ENCODE measurements at regions of chr1 and their contacts with region 1.

Region 1: DNA sequence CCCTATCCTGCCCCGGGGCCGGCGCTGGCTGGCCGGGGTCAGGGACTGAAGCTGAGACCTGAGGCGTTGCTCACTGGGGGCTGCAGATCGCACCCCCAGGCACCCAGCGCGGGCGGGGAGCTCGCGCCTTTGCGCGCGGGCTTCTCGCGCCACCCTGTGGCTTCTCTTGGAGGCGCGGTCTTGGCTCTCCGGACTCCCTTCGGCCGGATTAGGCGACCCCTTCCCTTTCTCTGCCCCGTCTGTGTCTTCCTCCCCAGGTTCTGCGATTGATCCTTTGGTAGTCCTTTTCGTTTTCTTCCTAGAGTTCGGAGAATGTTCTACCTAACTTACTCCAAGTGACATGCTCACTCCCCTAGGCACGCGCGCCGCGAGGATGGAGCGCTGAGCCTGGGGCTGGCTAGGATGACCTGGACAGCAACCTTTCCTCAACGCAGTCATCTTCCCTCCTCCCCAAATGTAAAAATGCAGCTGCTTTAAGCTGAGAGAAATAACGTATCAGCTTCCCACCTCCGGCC is 495 bp upstream of the NTRK1 start:
- DNase-seq: peak in 1 of 2 experiments; percentile 85
- H3K4me3 ChIP-seq: peak overlapping the region; percentile 31 to 62 (median 58)
- H3K27ac ChIP-seq: no peak overlapping the region
- H3K4me1 ChIP-seq: peaks cover 0 to 15% (median 9%) of the 10 kb centered on the region in 4 experiments; a peak in 6 of 7 replicates
- H3K27me3 ChIP-seq: peaks cover 55 to 87% (median 82%) of the 10 kb centered on the region in 4 experiments
- CTCF ChIP-seq: peak; percentile 67 to 80 (median 74)
- EP300 ChIP-seq: no peak
- POLR2A ChIP-seq: no peak
- RAD21 ChIP-seq: peak; percentile 76 to 83

Region 2: GRCh38 chr1:156677616-156678596 is 182.3 kb before region 1 on chr1:
- CTCF ChIA-PET with region 1: interaction called, 15 read pairs
- POLR2A ChIA-PET with region 1: no interaction called
- DNase-seq: peak in 1 of 2 experiments; percentile 74
- H3K4me3 ChIP-seq: peak overlapping the region; percentile 64 to 84 (median 74); a peak in 5 of 8 replicates
- H3K27ac ChIP-seq: no peak overlapping the region
- H3K4me1 ChIP-seq: peaks cover 7 to 37% (median 30%) of the 10 kb centered on the region in 4 experiments
- H3K27me3 ChIP-seq: no peaks in the 10 kb centered on the region; a peak in 2 of 7 replicates
- CTCF ChIP-seq: peak in 2 of 3 experiments; percentile 92 to 97; a peak in 3 of 4 replicates
- EP300 ChIP-seq: no peak
- POLR2A ChIP-seq: no peak
- RAD21 ChIP-seq: peak; percentile 89 to 95

Region 3: GRCh38 chr1:156797212-156797871 is 62.8 kb before region 1 on chr1:
- CTCF ChIA-PET with region 1: interaction called, 139 read pairs
- POLR2A ChIA-PET with region 1: interaction called, 3 read pairs
- DNase-seq: no peak
- H3K4me3 ChIP-seq: no peak overlapping the region
- H3K27ac ChIP-seq: no peak overlapping the region
- H3K4me1 ChIP-seq: no peaks in the 10 kb centered on the region
- H3K27me3 ChIP-seq: no peaks in the 10 kb centered on the region
- CTCF ChIP-seq: peak in 2 of 3 experiments; percentile 84 to 85; a peak in 3 of 4 replicates
- EP300 ChIP-seq: no peak
- POLR2A ChIP-seq: no peak
- RAD21 ChIP-seq: peak; percentile 81 to 83

Region 4: DNA sequence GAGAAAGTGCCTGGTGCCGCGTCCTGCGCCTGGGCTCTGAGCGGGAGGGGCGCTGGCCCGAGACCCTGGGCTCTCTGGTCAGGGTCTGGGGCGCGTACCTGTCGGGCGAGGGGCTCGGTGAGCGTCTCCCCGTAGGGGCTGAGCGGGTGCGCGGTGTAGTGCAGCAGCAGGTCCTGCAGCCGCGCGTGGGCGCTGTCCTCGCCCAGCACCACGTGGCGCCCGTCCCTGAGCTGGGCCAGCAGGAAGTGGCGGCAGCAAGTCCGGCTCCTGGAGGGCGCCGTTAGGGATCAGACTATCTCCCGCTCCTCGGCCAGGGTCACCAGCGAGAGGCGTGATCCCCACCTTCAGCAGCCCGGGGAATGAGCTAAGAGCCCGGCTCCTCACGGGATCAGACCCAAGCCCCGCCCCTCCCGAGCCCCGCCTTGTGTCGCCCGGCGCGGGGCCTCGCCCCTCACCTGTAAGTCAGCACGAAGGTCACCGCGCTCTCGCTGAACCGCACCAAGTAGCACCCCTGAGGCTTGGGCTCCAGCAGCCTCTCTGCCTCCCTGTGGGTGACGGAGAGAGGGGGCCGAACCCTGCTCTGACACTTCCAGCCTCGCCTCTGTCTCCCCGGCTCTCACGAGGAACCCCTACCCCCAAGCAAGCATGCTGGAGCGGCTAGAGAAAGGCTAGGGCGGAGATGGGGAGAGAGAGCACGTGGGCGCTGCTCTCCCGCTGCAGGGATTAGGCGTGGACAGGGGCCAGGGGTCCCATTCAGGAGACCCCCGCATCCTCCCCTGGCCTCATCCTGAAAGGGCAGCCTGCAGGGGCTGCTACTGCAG is 46.2 kb before region 1 on chr1:
- CTCF ChIA-PET with region 1: interaction called, 45 read pairs
- POLR2A ChIA-PET with region 1: interaction called, 3 read pairs
- DNase-seq: peak; percentile 68 to 91
- H3K4me3 ChIP-seq: peak overlapping the region; percentile 3 to 55 (median 38)
- H3K27ac ChIP-seq: no peak overlapping the region
- H3K4me1 ChIP-seq: peaks cover 0 to 11% (median 5%) of the 10 kb centered on the region in 4 experiments; a peak in 6 of 7 replicates
- H3K27me3 ChIP-seq: peaks cover 1 to 48% (median 42%) of the 10 kb centered on the region in 4 experiments
- CTCF ChIP-seq: peak; percentile 37 to 70 (median 59); a peak in 3 of 4 replicates
- EP300 ChIP-seq: no peak
- POLR2A ChIP-seq: peak in 1 of 2 experiments; percentile 75; a peak in 2 of 3 replicates
- RAD21 ChIP-seq: peak in 1 of 2 experiments; percentile 14; a peak in 1 of 4 replicates

Region 5: GRCh38 chr1:156927215-156928042 is 67.3 kb after region 1 on chr1:
- CTCF ChIA-PET with region 1: interaction called, 84 read pairs
- POLR2A ChIA-PET with region 1: interaction called, 3 read pairs
- DNase-seq: peak in 1 of 2 experiments; percentile 90
- H3K4me3 ChIP-seq: peak overlapping the region; percentile 36 to 70 (median 62)
- H3K27ac ChIP-seq: no peak overlapping the region
- H3K4me1 ChIP-seq: peaks cover 3 to 21% (median 9%) of the 10 kb centered on the region in 4 experiments; a peak in 6 of 7 replicates
- H3K27me3 ChIP-seq: peaks cover 51 to 71% (median 69%) of the 10 kb centered on the region in 4 experiments
- CTCF ChIP-seq: peak; percentile 90 to 92 (median 92)
- EP300 ChIP-seq: no peak
- POLR2A ChIP-seq: no peak
- RAD21 ChIP-seq: peak; percentile 88 to 93

Measured in H1 (cell line).